Sigmoid colon (tissue), 7 donors: ENCODE measurements at regions of chr16 and their contacts with region 1.

Region 1: DNA sequence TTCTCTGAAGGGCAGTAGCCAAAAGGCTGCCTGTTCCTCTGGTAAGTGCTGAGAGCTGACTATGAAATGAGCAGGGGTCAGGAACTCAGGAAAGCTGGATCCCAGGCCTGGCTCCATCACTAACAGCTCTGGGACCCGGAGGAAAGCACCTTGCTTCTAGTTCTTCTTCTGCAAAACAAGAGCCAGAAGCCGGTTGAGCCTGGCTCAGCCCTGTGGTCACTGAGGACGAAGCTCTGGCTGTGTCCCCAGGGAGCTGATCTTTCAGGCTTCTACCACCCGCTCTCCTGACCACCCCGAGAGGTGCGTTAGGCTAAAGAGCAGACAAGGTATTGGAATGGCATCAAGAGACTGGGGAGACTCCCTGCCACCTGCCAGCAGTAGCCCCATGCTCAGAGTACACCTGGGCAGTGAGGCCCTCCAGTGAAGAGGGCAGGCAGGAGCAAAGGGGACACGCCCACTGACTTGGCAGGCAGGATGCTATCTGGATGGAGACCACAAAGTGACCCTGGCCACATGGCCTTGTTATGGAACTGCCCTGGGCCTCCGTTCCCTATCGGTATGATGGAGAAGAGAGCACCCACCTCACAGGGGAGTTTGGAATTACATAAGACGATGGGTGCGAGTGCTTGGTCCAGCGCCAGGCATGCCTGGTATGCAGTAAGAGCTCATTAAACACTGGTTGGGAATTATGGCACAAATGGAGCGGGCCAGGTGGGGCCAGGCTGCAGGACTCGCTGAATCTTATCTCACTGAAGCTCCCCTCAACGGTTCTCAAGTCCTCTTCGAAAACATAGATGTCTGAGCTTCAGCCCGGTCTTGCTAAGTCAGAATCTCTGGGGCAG is 61.4 kb downstream of the COG7 start:
- DNase-seq: peak; percentile 53
- H3K4me3 ChIP-seq: no peak overlapping the region
- H3K27ac ChIP-seq: peak overlapping the region in 3 of 4 donors; percentile 66 to 78 (median 68)
- H3K4me1 ChIP-seq: peaks cover 0 to 39% (median 10%) of the 10 kb centered on the region in 4 donors
- H3K27me3 ChIP-seq: no peaks in the 10 kb centered on the region
- CTCF ChIP-seq: no peak
- EP300 ChIP-seq: no peak
- POLR2A ChIP-seq: no peak

Region 2: DNA sequence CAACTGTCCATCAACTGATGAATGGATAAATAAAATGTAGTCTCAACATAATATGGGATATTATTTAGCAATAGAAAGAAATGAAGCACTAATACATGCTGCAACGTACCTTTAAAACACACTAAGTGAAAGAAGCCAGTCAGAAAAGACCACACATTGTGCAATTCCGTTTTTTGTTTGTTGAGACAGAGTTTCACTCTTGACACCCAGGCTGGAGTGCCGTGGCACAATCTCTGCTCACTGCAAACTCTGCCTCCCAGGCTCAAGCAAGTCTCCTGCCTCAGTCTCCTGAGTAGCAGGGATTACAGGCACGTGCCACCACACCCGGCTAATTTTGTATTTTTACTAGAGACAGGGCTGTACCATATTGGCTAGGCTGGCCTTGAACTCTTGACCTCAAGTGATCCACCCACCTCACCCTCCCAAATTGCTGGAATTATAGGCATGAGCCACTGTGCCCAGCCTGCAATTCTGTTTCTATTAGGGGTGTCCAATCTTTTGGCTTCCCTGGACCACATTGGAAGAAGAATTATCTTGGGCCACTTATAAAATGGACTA is 49.4 kb before region 1 on chr16:
- intact Hi-C with region 1: loop called (anchors 5 kb)
- DNase-seq: no peak
- H3K4me3 ChIP-seq: no peak overlapping the region
- H3K27ac ChIP-seq: peak overlapping the region in 3 of 4 donors; percentile 36 to 59 (median 52)
- H3K4me1 ChIP-seq: peaks cover 0 to 19% (median 3%) of the 10 kb centered on the region in 4 donors
- H3K27me3 ChIP-seq: no peaks in the 10 kb centered on the region
- CTCF ChIP-seq: no peak
- EP300 ChIP-seq: no peak
- POLR2A ChIP-seq: no peak